Endothelial cell of umbilical vein (primary cell): ENCODE measurements at regions of chr15 and their contacts with region 1.

Region 1: DNA sequence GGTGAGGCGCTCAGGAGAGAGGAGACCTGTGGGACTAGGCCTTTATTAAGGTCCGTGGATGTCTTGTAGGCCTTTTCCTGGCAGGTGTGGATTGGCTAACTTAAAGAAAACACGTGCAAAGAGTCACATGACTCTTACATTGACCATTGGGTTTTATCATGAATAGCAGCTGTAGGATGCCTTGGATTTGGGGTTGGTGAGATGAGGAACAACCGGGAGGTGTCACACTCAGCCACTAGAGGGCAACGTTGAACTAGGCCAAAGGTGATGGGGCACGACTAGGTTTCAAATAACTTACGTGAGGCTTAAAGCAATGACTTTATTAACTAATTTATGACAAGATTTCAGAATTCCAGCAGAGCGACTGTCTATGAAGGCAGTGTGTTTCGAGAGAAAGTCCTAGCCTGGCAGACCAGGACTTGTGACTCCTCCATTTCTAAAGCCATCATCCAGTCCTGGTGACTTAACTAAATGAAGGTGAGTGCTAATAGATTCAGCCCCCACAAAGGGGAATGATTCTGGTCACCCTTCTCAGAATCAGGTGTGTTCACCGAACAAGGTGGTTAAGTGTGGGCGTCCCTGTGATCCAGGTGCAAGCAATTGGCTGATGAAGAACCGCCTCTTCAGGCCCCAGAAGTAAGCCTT is 345.6 kb downstream of the MCTP2 start:
- DNase-seq: peak; percentile 28
- H3K4me3 ChIP-seq: no peak overlapping the region
- H3K27ac ChIP-seq: no peak overlapping the region
- H3K4me1 ChIP-seq: no peaks in the 10 kb centered on the region
- H3K27me3 ChIP-seq: no peaks in the 10 kb centered on the region
- CTCF ChIP-seq: peak; percentile 64 to 68
- POLR2A ChIP-seq: no peak

Region 2: GRCh38 chr15:94412979-94413746 is 163.8 kb before region 1 on chr15:
- CTCF ChIA-PET with region 1: no interaction called
- POLR2A ChIA-PET with region 1: no interaction called
- dilution Hi-C with region 1: no loop called
- intact Hi-C with region 1: loop called (anchors 2 kb)
- DNase-seq: peak; percentile 47
- H3K4me3 ChIP-seq: no peak overlapping the region
- H3K27ac ChIP-seq: no peak overlapping the region
- H3K4me1 ChIP-seq: no peaks in the 10 kb centered on the region
- H3K27me3 ChIP-seq: no peaks in the 10 kb centered on the region
- CTCF ChIP-seq: peak in 1 of 2 donors; percentile 20
- POLR2A ChIP-seq: no peak

Region 3: GRCh38 chr15:94743668-94744067 is 166.7 kb after region 1 on chr15:
- CTCF ChIA-PET with region 1: no interaction called
- POLR2A ChIA-PET with region 1: no interaction called
- dilution Hi-C with region 1: no loop called
- intact Hi-C with region 1: loop called (anchors 5 kb)
- DNase-seq: no peak
- H3K4me3 ChIP-seq: no peak overlapping the region
- H3K27ac ChIP-seq: no peak overlapping the region
- H3K4me1 ChIP-seq: no peaks in the 10 kb centered on the region
- H3K27me3 ChIP-seq: no peaks in the 10 kb centered on the region
- CTCF ChIP-seq: no peak
- POLR2A ChIP-seq: no peak